Activated naive CD4-positive, alpha-beta T cell treated with anti-CD3 and anti-CD28 coated beads, Interleukin-2, amount 10 ng/mL, durations not matched to agents 7 days and 5 days (primary cell): ENCODE measurements at regions of chr3 and their contacts with region 1.

Region 1: GRCh38 chr3:128969993-128970739 is 23.7 kb downstream of the CFAP92 start:
- DNase-seq: peak; percentile 79
- H3K4me3 Mint-ChIP-seq: no peak overlapping the region
- H3K27ac Mint-ChIP-seq: no peak overlapping the region
- H3K4me1 Mint-ChIP-seq: peaks cover 3% of the 10 kb centered on the region
- H3K27me3 Mint-ChIP-seq: peaks cover 14% of the 10 kb centered on the region

Region 2: GRCh38 chr3:128745742-128746141 is 224.4 kb before region 1 on chr3:
- CTCF ChIA-PET with region 1: no interaction called
- DNase-seq: no peak
- H3K4me3 Mint-ChIP-seq: no peak overlapping the region
- H3K27ac Mint-ChIP-seq: no peak overlapping the region
- H3K4me1 Mint-ChIP-seq: peaks cover 8% of the 10 kb centered on the region
- H3K27me3 Mint-ChIP-seq: no peaks in the 10 kb centered on the region

Region 3: GRCh38 chr3:128879125-128879969 is 90.8 kb before region 1 on chr3 and contains the start of gene ACAD9:
- CTCF ChIA-PET with region 1: interaction called, 25 read pairs
- DNase-seq: peak; percentile 97
- H3K4me3 Mint-ChIP-seq: peak within 1 kb of the TSS; percentile 86
- H3K27ac Mint-ChIP-seq: peak within 1 kb of the TSS; percentile 88
- H3K4me1 Mint-ChIP-seq: peaks cover 67% of the 10 kb centered on the region
- H3K27me3 Mint-ChIP-seq: peaks cover 13% of the 10 kb centered on the region

Region 4: GRCh38 chr3:128993461-128994173 is 23.5 kb after region 1 on chr3 and contains the start of gene CFAP92:
- CTCF ChIA-PET with region 1: interaction called, 15 read pairs
- DNase-seq: peak; percentile 96
- H3K4me3 Mint-ChIP-seq: peak within 1 kb of the TSS; percentile 62
- H3K27ac Mint-ChIP-seq: no peak within 1 kb of the TSS
- H3K4me1 Mint-ChIP-seq: peaks cover 31% of the 10 kb centered on the region
- H3K27me3 Mint-ChIP-seq: peaks cover 38% of the 10 kb centered on the region

Region 5: GRCh38 chr3:129026728-129027543 is 56.8 kb after region 1 on chr3:
- CTCF ChIA-PET with region 1: interaction called, 18 read pairs
- DNase-seq: peak; percentile 96
- H3K4me3 Mint-ChIP-seq: peak overlapping the region; percentile 72
- H3K27ac Mint-ChIP-seq: peak overlapping the region; percentile 85
- H3K4me1 Mint-ChIP-seq: peaks cover 27% of the 10 kb centered on the region
- H3K27me3 Mint-ChIP-seq: peaks cover 38% of the 10 kb centered on the region

Region 6: DNA sequence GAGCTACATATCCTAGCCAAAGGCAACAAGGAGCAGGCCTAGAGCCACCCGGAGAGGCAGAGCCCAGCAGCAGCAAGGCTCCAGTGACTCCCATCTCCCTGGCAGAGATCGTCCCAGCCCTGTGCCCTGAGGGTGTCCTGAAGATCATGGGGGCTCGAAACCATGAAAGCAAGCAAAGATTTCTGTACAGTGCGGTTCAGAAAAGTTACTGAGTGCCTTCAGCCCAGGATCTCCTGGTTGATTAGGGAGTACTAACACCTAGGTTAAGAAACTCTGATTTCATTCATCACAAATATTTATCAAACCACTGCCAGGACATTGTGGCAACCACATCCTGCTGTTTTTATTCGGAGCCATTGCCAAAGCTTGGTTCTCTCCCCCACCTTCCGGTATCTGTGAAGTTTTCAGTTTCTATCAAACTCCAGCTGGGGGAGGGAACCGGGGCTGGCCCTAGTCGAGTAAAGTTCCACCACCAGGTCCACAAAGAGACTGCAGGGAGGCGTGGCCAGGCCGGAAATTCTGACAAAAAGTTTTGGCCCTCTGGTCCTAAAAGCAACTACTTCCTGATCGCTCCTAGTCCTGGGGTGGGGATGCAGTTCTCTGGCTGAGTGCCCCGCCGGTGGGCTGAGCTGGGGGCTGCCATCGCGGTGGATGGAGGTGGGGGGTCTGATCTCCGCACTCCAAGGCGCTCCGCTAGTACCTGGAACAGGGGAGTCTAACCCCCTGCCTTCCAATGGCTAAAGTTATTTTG is 150.3 kb after region 1 on chr3:
- CTCF ChIA-PET with region 1: interaction called, 11 read pairs
- DNase-seq: peak; percentile 98
- H3K4me3 Mint-ChIP-seq: peak overlapping the region; percentile 91
- H3K27ac Mint-ChIP-seq: peak overlapping the region; percentile 98
- H3K4me1 Mint-ChIP-seq: peaks cover 53% of the 10 kb centered on the region
- H3K27me3 Mint-ChIP-seq: no peaks in the 10 kb centered on the region

Region 7: GRCh38 chr3:129160891-129161859 is 191.0 kb after region 1 on chr3 and contains the start of gene ISY1:
- CTCF ChIA-PET with region 1: interaction called, 29 read pairs
- DNase-seq: peak; percentile 91
- H3K4me3 Mint-ChIP-seq: peak within 1 kb of the TSS; percentile 91
- H3K27ac Mint-ChIP-seq: peak within 1 kb of the TSS; percentile 97
- H3K4me1 Mint-ChIP-seq: peaks cover 36% of the 10 kb centered on the region
- H3K27me3 Mint-ChIP-seq: peaks cover 4% of the 10 kb centered on the region

Region 8: GRCh38 chr3:129249276-129250065 is 279.3 kb after region 1 on chr3 and contains the start of gene COPG1:
- CTCF ChIA-PET with region 1: interaction called, 88 read pairs
- DNase-seq: peak; percentile 89
- H3K4me3 Mint-ChIP-seq: peak within 1 kb of the TSS; percentile 96
- H3K27ac Mint-ChIP-seq: peak within 1 kb of the TSS; percentile 96
- H3K4me1 Mint-ChIP-seq: peaks cover 64% of the 10 kb centered on the region
- H3K27me3 Mint-ChIP-seq: peaks cover 6% of the 10 kb centered on the region